ENCODE measurements at regions of chr13 and their contacts with region 1.

Region 1: GRCh38 chr13:99176309-99177276 is 24.1 kb upstream of the UBAC2 start:
- DNase-seq: peak; percentile 72
- ATAC-seq: peak; percentile 94

Region 2: DNA sequence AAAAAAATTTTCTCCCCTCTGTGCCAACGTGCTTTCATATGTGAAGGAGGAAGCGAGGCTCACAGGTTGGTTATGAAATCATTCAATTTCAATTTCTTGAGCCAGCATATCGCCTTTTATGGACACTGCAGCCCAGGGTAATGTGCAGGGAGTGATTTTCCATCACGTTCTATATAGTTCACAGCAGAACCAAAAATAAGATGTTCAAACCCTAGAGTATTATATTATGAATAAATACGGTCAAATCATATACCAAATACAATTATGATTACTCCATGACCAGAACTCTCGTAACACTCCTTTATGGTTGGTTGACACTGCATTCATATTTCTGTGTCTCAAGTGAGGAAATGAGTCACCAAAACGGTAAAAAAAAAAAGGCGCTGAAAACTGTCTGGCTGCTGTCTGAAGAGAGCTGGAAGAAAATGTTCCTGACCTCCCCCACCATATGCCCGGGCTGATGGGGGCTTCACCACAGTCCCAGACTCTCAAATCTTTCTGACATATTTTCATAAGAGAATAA is 51.7 kb before region 1 on chr13:
- intact Hi-C with region 1: no loop called
- DNase-seq: peak; percentile 30
- ATAC-seq: peak; percentile 87

Region 3: GRCh38 chr13:99436686-99437416 is 260.3 kb after region 1 on chr13:
- intact Hi-C with region 1: loop called (anchors 5 kb)
- DNase-seq: peak; percentile 91
- ATAC-seq: peak; percentile 55

Measured in left ventricle myocardium superior (tissue), 1 donor.